Right ventricle myocardium superior (tissue), 1 donor: ENCODE measurements at regions of chr18 and their contacts with region 1.

Region 1: GRCh38 chr18:34787931-34788532 is 77.9 kb downstream of the DTNA start:
- DNase-seq: peak; percentile 41
- ATAC-seq: peak; percentile 80

Region 2: GRCh38 chr18:34352385-34353163 is 435.5 kb before region 1 on chr18:
- intact Hi-C with region 1: loop called (anchors 10 kb)
- DNase-seq: no peak
- ATAC-seq: peak; percentile 63

Region 3: GRCh38 chr18:34493099-34493544 is 294.9 kb before region 1 on chr18:
- intact Hi-C with region 1: loop called (anchors 5 kb)
- DNase-seq: peak; percentile 86
- ATAC-seq: peak; percentile 89

Region 4: DNA sequence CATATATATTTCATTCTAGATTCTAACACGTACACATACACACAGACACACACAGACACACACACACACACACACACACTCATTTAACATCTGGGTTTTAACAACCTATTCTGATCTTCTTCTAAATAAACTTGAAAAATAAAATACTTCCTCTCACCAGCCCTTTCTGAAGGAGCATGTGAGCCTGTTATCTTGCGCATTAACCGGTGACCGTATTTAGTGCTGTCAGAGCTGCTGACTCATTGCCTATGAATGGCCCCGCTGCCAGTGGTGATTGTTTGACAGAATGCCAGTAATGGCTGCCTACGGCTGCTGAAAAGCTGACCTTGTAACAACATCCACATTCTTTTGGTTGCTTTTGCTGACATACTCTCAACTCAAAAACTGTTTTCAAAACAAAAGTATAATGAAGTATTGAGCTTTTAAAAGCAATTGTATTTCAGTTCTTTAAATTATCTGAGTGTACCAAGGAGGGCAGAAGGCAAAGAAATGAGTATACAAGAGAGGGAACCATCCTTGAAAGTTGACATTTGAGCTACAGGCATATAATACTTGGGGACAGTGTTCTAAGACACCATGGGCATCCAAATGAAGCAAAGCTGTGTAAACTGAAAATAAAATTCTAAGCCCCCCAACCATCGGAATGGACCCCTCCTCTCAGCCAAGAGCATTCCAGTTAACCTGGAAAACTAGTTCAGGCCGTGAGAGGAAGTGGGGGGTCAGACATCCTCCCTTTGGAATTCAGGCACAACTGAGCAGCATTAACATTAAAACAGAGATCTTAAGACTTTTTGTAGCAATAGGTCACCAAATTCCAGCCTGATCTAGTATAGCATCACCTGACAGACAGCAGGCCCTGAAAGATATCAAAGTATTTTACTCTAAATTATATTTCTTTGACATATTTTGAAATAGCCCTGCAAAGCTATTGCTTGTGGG is 128.2 kb before region 1 on chr18:
- intact Hi-C with region 1: loop called (anchors 5 kb)
- DNase-seq: peak; percentile 84
- ATAC-seq: peak; percentile 97

Region 5: DNA sequence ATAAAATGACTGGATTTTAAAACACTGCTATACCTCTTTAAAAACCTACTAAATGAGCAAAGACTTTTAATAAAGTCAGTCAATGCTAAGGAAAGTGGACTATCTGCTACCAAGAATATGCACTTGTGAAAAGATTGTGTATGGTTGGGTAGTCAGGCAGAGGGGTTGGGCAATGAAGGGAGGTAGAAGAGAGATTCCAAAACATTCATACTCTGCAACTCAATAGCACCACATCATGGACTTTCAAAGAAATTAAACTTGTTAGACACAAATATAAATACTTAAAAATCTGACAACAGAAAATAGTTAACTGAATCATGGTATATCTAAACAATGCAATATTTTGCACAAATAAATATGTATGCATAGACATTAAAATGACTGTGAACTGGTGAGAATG is 113.3 kb after region 1 on chr18:
- intact Hi-C with region 1: no loop called
- DNase-seq: no peak
- ATAC-seq: no peak